ENCODE measurements at regions of chr10 and their contacts with region 1.

Region 1: DNA sequence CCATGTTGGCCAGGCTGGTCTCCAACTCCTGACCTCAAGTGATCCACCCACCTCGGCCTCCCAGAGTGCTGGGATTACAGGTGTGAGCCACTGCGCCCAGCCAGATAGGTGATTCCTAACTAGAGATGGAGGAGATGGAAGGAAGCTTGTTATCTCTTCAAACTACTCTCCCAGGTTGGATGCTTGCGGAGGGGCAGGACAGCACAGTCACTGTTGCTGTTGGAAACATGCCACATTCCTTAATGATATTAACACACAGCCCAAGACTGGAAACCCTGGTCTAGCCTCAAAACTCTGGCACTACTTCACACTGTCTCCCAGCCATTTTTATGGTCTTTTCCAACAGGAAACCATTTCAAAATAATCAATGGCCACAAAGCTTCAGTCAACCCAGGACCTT is 468.8 kb upstream of the NRP1 start:
- DNase-seq: no peak
- ATAC-seq: no peak
- H3K4me3 ChIP-seq: no peak overlapping the region
- H3K4me3 Mint-ChIP-seq: no peak overlapping the region
- H3K27ac ChIP-seq: no peak overlapping the region
- H3K27ac Mint-ChIP-seq: no peak overlapping the region
- H3K4me1 ChIP-seq: no peaks in the 10 kb centered on the region
- H3K4me1 Mint-ChIP-seq: no peaks in the 10 kb centered on the region
- H3K27me3 ChIP-seq: no peaks in the 10 kb centered on the region
- H3K27me3 Mint-ChIP-seq: no peaks in the 10 kb centered on the region
- CTCF ChIP-seq: no peak

Region 2: DNA sequence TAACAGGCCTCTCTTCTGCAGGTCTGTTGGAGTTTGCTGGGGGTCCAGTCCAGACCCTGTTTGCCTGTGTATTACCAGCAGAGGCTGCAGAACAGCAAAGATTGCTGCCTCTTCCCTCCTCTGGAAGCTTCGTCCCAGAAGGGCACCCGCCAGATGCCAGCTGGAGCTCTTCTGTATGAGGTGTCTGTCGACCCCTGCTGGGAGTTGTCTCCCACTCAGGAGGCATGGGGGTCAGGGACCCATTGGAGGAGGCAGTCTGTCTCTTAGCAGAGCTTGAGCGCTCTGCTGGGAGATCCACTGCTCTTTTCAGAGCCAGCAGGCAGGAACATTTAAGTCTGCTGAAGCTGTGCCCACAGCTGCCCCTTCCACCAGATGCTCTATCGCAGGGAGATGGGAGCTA is 107.7 kb before region 1 on chr10:
- CTCF ChIA-PET with region 1: no interaction called
- POLR2A ChIA-PET with region 1: no interaction called
- intact Hi-C with region 1: no loop called
- DNase-seq: no peak
- ATAC-seq: no peak
- H3K4me3 ChIP-seq: no peak overlapping the region
- H3K4me3 Mint-ChIP-seq: no peak overlapping the region
- H3K27ac ChIP-seq: no peak overlapping the region
- H3K27ac Mint-ChIP-seq: no peak overlapping the region
- H3K4me1 ChIP-seq: no peaks in the 10 kb centered on the region
- H3K4me1 Mint-ChIP-seq: no peaks in the 10 kb centered on the region
- H3K27me3 ChIP-seq: no peaks in the 10 kb centered on the region
- H3K27me3 Mint-ChIP-seq: peaks cover 1% of the 10 kb centered on the region
- CTCF ChIP-seq: no peak

Region 3: DNA sequence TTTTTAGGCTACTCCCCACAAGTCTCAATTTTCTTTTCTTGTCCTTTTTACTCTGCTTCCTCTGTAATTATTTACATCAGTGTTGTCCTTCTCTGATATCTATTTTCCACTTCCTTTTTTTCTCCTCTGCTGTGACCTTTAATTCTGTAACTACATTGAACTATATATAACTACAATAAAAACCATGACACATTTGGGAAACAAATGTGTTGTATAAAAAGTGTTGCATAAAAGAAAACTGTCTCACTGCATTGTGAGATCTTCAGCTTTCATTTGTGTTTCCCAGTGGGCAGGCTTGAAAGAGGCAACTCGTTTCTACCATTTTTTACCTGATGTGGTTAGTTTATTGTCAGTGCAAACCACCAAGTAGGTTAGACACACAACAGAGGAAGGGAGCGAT is 15.1 kb after region 1 on chr10:
- CTCF ChIA-PET with region 1: interaction called, 3 read pairs
- POLR2A ChIA-PET with region 1: no interaction called
- intact Hi-C with region 1: loop called in 1 of 2 experiments (anchors 1 kb)
- DNase-seq: no peak
- ATAC-seq: no peak
- H3K4me3 ChIP-seq: no peak overlapping the region
- H3K4me3 Mint-ChIP-seq: no peak overlapping the region
- H3K27ac ChIP-seq: no peak overlapping the region
- H3K27ac Mint-ChIP-seq: no peak overlapping the region
- H3K4me1 ChIP-seq: no peaks in the 10 kb centered on the region
- H3K4me1 Mint-ChIP-seq: no peaks in the 10 kb centered on the region
- H3K27me3 ChIP-seq: no peaks in the 10 kb centered on the region
- H3K27me3 Mint-ChIP-seq: no peaks in the 10 kb centered on the region
- CTCF ChIP-seq: no peak